ENCODE measurements at regions of chr4 and their contacts with region 1.

Region 1: DNA sequence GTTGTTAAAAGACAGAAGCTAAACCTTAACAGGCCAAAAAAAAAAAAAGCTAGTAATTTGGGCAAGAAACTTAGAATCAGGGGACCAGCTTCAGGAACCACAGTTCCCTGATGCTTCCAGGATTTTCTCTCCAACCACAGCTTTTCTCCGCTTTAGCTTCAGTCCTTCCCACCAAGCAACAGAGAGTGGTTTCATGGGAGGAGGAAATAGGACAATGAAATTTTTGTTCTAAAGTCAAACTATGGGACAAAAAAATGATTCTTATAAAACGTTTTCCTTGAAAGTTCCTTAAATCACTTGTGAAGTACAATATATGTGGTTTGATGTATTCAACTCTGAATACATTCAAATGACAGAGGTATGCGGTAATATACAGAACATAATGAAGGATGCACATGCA is 71.0 kb upstream of the DHX15 start:
- DNase-seq: no peak
- ATAC-seq: no peak
- H3K4me3 ChIP-seq: no peak overlapping the region
- H3K27ac ChIP-seq: no peak overlapping the region
- H3K4me1 ChIP-seq: no peaks in the 10 kb centered on the region
- H3K27me3 ChIP-seq: no peaks in the 10 kb centered on the region
- CTCF ChIP-seq: no peak

Region 2: DNA sequence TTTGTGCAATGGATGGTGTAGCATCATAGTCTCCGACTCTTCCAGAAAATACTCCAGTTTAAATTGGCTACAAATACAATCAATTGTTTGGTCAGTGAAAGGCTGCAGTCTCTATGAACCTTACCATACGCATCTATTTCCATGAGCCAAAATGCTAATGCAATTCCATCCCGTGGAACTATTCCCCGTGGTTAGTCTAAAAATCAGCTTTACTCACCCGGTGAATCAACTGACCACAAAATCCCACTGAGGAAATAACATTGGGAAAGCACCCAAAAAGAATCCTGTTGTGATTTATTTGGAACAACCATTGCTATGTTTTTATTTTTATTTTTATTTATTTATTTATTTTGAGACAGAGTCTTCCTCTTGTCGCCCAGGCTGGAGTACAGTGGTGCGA is 158.1 kb before region 1 on chr4:
- CTCF ChIA-PET with region 1: no interaction called
- POLR2A ChIA-PET with region 1: interaction called, 10 read pairs
- in situ Hi-C with region 1: no loop called
- intact Hi-C with region 1: no loop called
- DNase-seq: no peak
- ATAC-seq: no peak
- H3K4me3 ChIP-seq: no peak overlapping the region
- H3K27ac ChIP-seq: no peak overlapping the region
- H3K4me1 ChIP-seq: no peaks in the 10 kb centered on the region
- H3K27me3 ChIP-seq: no peaks in the 10 kb centered on the region; the same call in 1 of the 2 replicates
- CTCF ChIP-seq: no peak

Region 3: DNA sequence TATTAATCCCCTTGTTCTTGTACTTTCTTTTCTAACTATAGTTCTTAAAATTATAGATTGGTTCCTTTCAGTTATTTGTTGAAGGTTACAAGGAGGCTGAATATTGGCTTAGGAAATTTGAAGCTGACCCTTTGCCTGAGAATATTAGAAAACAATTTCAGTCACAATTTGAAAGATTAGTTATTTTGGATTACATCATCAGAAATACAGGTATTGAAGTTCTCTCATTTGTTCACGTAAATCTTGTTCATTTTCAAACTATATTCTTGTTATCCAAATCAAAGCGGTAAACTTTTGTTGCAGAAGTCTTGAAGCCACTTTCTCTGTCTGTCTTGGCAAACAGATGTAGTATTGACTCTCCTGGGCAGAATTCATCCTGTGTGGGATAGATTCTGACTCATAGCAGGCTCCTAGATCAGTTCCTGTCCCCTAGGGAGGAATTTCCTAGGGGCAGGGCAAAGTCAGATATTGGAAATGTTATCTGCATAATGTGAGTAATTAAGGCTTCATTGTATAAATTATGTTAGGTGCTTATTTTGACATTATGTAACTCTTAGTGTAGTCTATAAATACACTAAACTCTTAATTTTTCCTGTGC is 603.8 kb after region 1 on chr4:
- CTCF ChIA-PET with region 1: no interaction called
- POLR2A ChIA-PET with region 1: no interaction called
- in situ Hi-C with region 1: no loop called
- intact Hi-C with region 1: no loop called
- DNase-seq: no peak
- ATAC-seq: no peak
- H3K4me3 ChIP-seq: no peak overlapping the region
- H3K27ac ChIP-seq: no peak overlapping the region
- H3K4me1 ChIP-seq: no peaks in the 10 kb centered on the region
- H3K27me3 ChIP-seq: no peaks in the 10 kb centered on the region
- CTCF ChIP-seq: no peak